A549 (cell line): ENCODE measurements at regions of chr6 and their contacts with region 1.

Region 1: GRCh38 chr6:136643850-136644596 is 93.8 kb upstream of the MAP7 start:
- DNase-seq: peak; percentile 26 to 83
- ATAC-seq: peak; percentile 99 to 100
- H3K4me3 ChIP-seq: no peak overlapping the region
- H3K27ac ChIP-seq: 0 out of 6 replicates have a peak overlapping the region, but pooled peaks of 1 of the 2 experiments have one; percentile 6
- H3K4me1 ChIP-seq: 0 out of 3 replicates have a peak, but pooled peaks cover 6% of the 10 kb centered on the region
- CTCF ChIP-seq: peak; percentile 84
- EP300 ChIP-seq: no peak
- POLR2A ChIP-seq: no peak
- RAD21 ChIP-seq: peak; percentile 84 to 85

Region 2: GRCh38 chr6:136628996-136629395 is 15.0 kb before region 1 on chr6:
- CTCF ChIA-PET with region 1: interaction called, 52 read pairs
- POLR2A ChIA-PET with region 1: no interaction called
- DNase-seq: no peak
- ATAC-seq: no peak
- H3K4me3 ChIP-seq: no peak overlapping the region
- H3K27ac ChIP-seq: no peak overlapping the region
- H3K4me1 ChIP-seq: no peaks in the 10 kb centered on the region
- CTCF ChIP-seq: no peak
- EP300 ChIP-seq: no peak
- POLR2A ChIP-seq: no peak
- RAD21 ChIP-seq: no peak

Region 3: GRCh38 chr6:136657666-136658065 is 13.6 kb after region 1 on chr6:
- CTCF ChIA-PET with region 1: interaction called, 24 read pairs
- POLR2A ChIA-PET with region 1: no interaction called
- DNase-seq: no peak
- ATAC-seq: no peak
- H3K4me3 ChIP-seq: no peak overlapping the region
- H3K27ac ChIP-seq: no peak overlapping the region
- H3K4me1 ChIP-seq: no peaks in the 10 kb centered on the region
- CTCF ChIP-seq: no peak
- EP300 ChIP-seq: no peak
- POLR2A ChIP-seq: no peak
- RAD21 ChIP-seq: no peak

Region 4: GRCh38 chr6:136669299-136669699 is 25.3 kb after region 1 on chr6:
- CTCF ChIA-PET with region 1: interaction called, 25 read pairs
- POLR2A ChIA-PET with region 1: no interaction called
- DNase-seq: no peak
- ATAC-seq: no peak
- H3K4me3 ChIP-seq: no peak overlapping the region
- H3K27ac ChIP-seq: no peak overlapping the region
- H3K4me1 ChIP-seq: peaks cover 4% of the 10 kb centered on the region; the same call in 1 of the 3 replicates
- CTCF ChIP-seq: no peak
- EP300 ChIP-seq: no peak
- POLR2A ChIP-seq: no peak
- RAD21 ChIP-seq: no peak

Region 5: DNA sequence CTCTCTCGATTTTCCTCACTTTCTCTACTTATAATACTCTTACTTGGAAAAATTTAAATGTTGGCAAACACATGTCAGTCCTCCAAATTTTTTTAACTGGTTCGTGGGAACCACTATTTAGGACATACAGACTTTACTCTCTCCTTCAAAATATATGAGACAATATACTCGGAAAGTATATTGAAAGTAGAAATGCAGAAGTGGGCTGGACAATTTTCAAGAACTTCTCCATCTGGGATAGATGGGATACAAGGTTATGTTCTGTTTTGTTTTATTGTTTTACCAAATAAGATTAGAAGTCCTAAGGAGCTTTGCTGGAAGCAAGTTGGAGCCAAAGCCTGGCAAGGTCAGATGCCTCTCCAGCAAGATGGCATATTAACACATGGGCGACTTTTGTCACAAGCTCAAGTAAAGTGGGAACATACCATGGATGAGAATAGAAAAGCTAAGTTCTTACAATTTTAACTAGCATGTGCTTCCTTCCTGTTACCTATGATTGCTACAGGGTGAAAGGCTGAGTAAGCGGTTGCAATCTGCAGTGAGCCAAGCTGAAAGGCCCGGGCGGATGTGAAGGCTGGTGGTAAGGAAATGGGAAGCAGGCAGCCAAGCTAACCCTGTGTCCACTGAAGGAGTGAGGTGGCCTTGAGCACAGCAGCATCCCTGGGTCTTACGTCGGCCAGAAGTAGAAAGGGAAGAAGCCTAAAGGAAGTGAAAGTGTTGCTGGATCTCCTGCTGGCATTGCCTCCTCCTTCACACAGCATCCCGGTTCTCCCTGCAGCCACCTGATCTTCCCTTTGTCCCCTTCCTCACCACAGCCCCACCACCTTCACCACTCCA is 141.1 kb after region 1 on chr6:
- CTCF ChIA-PET with region 1: interaction called, 146 read pairs
- POLR2A ChIA-PET with region 1: no interaction called
- DNase-seq: no peak
- ATAC-seq: no peak
- H3K4me3 ChIP-seq: no peak overlapping the region
- H3K27ac ChIP-seq: no peak overlapping the region
- H3K4me1 ChIP-seq: peaks cover 12% of the 10 kb centered on the region; the same call in 2 of the 3 replicates
- CTCF ChIP-seq: no peak
- EP300 ChIP-seq: no peak
- POLR2A ChIP-seq: no peak
- RAD21 ChIP-seq: no peak

Region 6: GRCh38 chr6:137013738-137014602 is 369.9 kb after region 1 on chr6:
- CTCF ChIA-PET with region 1: interaction called, 12 read pairs
- POLR2A ChIA-PET with region 1: no interaction called
- DNase-seq: peak; percentile 30 to 53
- ATAC-seq: peak; percentile 81 to 92
- H3K4me3 ChIP-seq: no peak overlapping the region
- H3K27ac ChIP-seq: no peak overlapping the region
- H3K4me1 ChIP-seq: no peaks in the 10 kb centered on the region
- CTCF ChIP-seq: peak; percentile 58
- EP300 ChIP-seq: no peak
- POLR2A ChIP-seq: no peak
- RAD21 ChIP-seq: peak; percentile 58 to 65